ENCODE measurements at regions of chr15 and their contacts with region 1.

Region 1: DNA sequence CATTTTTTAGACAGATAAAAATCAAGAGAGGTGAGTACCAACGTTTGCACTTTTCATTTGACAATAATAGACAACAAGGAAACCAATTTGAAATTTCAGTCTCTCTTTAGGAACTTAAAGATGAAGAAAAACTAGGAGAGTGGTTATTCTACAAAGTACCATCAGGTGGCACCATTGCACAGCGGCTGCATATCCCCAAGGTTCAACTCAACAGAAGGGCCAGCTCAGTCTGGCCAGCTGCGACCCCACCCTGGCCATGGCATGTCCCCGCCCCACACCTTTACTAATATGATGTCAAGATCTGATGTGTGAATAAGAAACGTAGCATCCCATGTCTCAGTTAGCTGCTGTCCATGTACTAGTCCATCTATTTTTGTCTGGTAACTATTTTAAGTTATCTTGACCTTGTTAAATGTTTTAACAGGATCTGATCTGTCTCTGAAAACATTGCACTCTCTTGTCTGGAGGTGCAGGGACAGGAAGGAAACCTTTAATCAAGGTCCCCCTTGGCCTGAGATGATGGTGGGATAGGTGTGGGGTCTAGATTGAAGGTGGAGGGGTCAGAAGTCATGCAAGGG is 35.5 kb upstream of the CGNL1 start:
- DNase-seq: peak; percentile 68
- H3K4me3 ChIP-seq: no peak overlapping the region
- H3K27ac ChIP-seq: no peak overlapping the region
- H3K4me1 ChIP-seq: peaks cover 6% of the 10 kb centered on the region
- H3K27me3 ChIP-seq: no peaks in the 10 kb centered on the region
- CTCF ChIP-seq: peak; percentile 86

Region 2: DNA sequence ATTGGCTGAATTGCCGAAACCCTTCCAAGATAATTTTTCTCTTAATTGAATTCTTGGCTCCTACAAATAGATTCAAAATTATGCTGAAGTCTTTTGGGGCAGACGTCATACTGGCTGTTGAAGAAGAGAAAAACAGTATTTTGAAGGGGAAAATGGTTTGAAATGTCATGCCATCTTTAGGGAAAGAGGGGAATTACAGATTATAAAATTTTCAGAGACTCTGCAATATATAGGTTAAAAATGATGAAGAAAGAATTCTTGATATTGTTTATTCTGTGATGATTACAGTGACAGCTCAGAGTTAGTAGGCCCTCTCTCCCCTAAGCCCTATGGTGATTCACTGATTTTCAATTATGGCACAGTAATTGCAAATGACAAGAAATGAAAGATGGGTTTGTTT is 121.6 kb after region 1 on chr15:
- CTCF ChIA-PET with region 1: no interaction called
- POLR2A ChIA-PET with region 1: no interaction called
- intact Hi-C with region 1: loop called (anchors 5 kb)
- DNase-seq: peak; percentile 39
- H3K4me3 ChIP-seq: no peak overlapping the region
- H3K27ac ChIP-seq: no peak overlapping the region
- H3K4me1 ChIP-seq: peaks cover 16% of the 10 kb centered on the region
- H3K27me3 ChIP-seq: no peaks in the 10 kb centered on the region
- CTCF ChIP-seq: peak; percentile 52

Measured in A673 (cell line).